ENCODE measurements at regions of chr1 and their contacts with region 1.

Region 1: DNA sequence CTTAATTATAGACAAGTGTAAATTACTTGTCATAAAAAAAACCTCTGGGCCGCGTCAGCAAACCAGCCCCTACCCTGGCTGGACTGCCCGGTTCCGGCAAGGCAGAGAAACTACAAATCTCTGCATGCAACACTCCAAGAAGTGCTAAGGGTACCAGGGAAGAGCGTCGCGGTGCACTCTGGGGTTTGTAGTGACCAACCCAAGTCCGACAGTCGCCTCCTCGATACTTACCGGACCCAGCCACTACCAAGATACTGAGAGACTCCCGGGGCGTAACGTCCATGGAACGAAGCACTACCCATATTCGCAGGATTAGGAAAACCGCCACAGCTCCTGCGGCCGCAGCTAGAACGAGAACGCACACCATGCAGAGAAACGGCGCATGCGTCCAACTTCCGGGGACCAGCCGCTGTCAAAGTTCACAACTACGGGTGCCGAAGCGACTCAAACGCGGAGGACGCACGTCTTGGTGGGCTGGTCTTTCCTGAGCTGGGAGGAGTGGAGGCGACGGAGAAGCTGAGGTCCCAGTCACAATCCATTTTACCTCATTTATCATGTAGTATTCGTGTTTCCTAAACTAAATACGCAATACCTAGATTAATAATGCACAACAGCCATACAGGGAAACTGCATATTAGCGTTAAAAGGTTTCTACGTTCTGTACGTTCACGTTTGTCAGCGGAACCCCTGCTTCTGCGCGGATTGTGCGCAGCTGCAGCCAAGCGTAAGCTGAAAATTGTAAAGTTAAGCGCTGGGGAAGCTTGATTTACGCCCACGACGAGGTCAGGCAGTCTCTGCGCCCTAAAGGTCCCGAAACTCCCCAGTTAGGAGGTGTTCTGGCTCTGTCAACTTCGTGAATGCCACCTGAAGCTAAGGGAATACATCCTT is at the start of gene ALG14:
- DNase-seq: peak; percentile 93
- H3K4me3 ChIP-seq: peak within 1 kb of the TSS; percentile 68 to 71
- H3K27ac ChIP-seq: peak within 1 kb of the TSS; percentile 92 to 94
- H3K4me1 ChIP-seq: no peaks in the 10 kb centered on the region
- H3K27me3 ChIP-seq: no peaks in the 10 kb centered on the region
- CTCF ChIP-seq: peak in 1 of 4 experiments; percentile 11
- POLR2A ChIP-seq: peak; percentile 55
- total RNA-seq, gene ALG14: 2.0 to 2.3 TPM

Region 2: DNA sequence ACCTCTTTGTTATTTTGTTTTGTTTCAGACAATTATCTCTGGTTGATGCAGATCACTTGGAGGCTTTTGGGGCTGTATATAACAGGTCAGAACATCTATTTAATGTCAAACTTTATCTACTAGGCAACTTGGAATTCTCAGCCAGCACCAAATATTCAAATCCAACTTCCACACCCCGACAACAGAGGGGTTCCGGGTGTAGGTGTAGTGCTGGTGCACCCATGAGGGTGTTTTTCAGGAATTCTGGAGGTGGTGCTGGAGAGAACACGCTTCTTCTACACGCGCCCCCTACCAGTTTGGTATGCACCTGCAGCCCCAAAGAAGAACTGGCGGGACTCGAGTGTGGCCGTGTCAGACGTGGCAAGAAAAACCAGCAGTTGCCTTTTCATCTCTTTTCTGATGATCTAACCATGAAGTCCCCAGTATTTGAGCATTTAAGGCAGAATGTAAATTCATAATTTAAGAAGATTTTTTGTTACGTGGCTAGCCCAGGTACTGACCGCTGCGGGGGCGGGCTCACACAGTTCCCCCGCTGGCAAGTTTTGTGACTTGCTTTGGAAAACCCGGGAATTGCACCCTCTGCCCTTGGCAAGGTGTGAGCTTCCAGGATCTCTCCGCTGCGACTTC is 43.9 kb after region 1 on chr1:
- intact Hi-C with region 1: loop called (anchors 2 kb)
- DNase-seq: peak; percentile 60
- H3K4me3 ChIP-seq: peak overlapping the region; percentile 73 to 79
- H3K27ac ChIP-seq: peak overlapping the region; percentile 78 to 80
- H3K4me1 ChIP-seq: no peaks in the 10 kb centered on the region
- H3K27me3 ChIP-seq: no peaks in the 10 kb centered on the region
- CTCF ChIP-seq: peak; percentile 25 to 64 (median 50)
- POLR2A ChIP-seq: no peak

Region 3: GRCh38 chr1:95169544-95169943 is 96.8 kb after region 1 on chr1:
- intact Hi-C with region 1: no loop called
- DNase-seq: no peak
- H3K4me3 ChIP-seq: no peak overlapping the region
- H3K27ac ChIP-seq: no peak overlapping the region
- H3K4me1 ChIP-seq: no peaks in the 10 kb centered on the region
- H3K27me3 ChIP-seq: no peaks in the 10 kb centered on the region
- CTCF ChIP-seq: no peak
- POLR2A ChIP-seq: no peak

Region 4: GRCh38 chr1:95183952-95184351 is 111.2 kb after region 1 on chr1:
- intact Hi-C with region 1: no loop called
- DNase-seq: no peak
- H3K4me3 ChIP-seq: no peak overlapping the region
- H3K27ac ChIP-seq: no peak overlapping the region
- H3K4me1 ChIP-seq: no peaks in the 10 kb centered on the region
- H3K27me3 ChIP-seq: no peaks in the 10 kb centered on the region
- CTCF ChIP-seq: no peak
- POLR2A ChIP-seq: no peak

Region 5: DNA sequence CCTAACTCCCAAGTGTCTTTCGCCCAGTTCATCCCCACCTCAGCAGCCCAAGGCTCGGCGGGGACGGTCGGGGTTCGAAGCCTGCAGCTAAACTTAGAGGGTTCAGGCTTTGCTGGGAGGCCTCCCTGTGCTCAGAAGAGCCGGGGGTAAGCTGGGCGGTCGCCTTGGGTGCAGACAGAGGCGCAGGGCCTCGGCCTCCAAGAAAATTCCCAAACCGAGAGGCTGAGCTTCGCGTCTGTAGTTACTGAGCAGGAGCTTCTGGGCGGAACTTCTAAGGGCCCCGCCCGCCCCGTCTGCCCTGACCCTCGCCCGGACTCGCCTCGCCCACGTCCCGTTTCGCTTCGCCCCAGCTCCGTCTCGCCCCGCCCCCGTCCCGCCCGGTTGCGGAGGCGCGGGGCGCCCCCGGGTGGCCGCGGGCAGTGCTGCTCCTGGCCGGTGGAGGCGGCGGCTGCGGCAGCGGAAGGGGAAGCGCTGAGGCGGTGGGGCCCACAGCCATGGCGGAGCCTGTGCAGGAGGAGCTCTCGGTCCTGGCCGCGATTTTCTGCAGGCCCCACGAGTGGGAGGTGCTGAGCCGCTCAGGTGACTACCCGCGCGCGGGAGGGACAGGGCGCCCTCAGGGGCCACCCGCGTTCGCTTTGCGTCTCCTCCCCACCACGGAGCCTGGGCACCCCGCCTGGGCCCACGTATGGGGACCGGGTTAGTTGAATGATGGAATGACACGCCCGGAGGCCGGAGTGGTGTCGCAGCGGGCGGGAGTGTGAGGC is 161.1 kb after region 1 on chr1 and contains the start of gene RWDD3:
- intact Hi-C with region 1: loop called (anchors 2 kb)
- DNase-seq: peak; percentile 94
- H3K4me3 ChIP-seq: peak within 1 kb of the TSS; percentile 73 to 85
- H3K27ac ChIP-seq: peak within 1 kb of the TSS; percentile 84 to 85
- H3K4me1 ChIP-seq: peaks cover 3% of the 10 kb centered on the region
- H3K27me3 ChIP-seq: no peaks in the 10 kb centered on the region
- CTCF ChIP-seq: peak; percentile 64 to 95 (median 94)
- POLR2A ChIP-seq: peak; percentile 60
- total RNA-seq, gene RWDD3: 12.8 to 14.4 TPM

Measured in prostate gland (tissue), 2 donors.